ENCODE measurements at regions of chr7 and their contacts with region 1.

Region 1: GRCh38 chr7:149147072-149147751 is at the start of gene ZNF398:
- DNase-seq: peak; percentile 79
- H3K4me3 Mint-ChIP-seq: peak within 1 kb of the TSS; percentile 85
- H3K27ac Mint-ChIP-seq: peak within 1 kb of the TSS; percentile 90
- H3K4me1 Mint-ChIP-seq: peaks cover 35% of the 10 kb centered on the region
- H3K27me3 Mint-ChIP-seq: no peaks in the 10 kb centered on the region
- total RNA-seq, gene ZNF398: 12.1 to 13.7 TPM

Region 2: GRCh38 chr7:149090397-149091195 is 56.6 kb before region 1 on chr7 and contains the start of gene ZNF786:
- CTCF ChIA-PET with region 1: interaction called, 11 read pairs
- POLR2A ChIA-PET with region 1: interaction called, 3 read pairs
- DNase-seq: peak; percentile 90
- H3K4me3 Mint-ChIP-seq: peak within 1 kb of the TSS; percentile 97
- H3K27ac Mint-ChIP-seq: peak within 1 kb of the TSS; percentile 98
- H3K4me1 Mint-ChIP-seq: peaks cover 20% of the 10 kb centered on the region
- H3K27me3 Mint-ChIP-seq: no peaks in the 10 kb centered on the region
- total RNA-seq, gene ZNF786: 6.0 to 7.0 TPM

Region 3: DNA sequence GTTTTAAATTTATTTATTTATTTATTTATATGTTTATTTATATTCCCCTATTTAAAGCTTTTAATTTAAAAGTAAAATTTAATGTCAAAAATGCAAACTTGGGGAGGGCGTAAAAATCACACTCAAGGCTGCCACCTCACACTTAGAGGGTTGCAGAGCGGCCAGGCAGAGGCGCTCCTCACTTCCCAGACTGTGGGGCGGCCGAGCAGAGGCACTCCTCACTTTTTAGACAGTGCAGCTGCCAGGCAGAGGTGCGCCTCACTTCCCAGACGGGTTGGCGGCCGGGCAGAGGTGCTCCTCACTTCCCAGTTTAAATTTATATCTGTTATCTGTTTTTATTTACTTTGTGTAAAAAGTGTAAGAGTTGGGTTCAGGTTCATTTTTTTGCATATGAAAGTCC is 11.1 kb before region 1 on chr7:
- CTCF ChIA-PET with region 1: interaction called, 10 read pairs
- POLR2A ChIA-PET with region 1: interaction called, 6 read pairs
- DNase-seq: no peak
- H3K4me3 Mint-ChIP-seq: no peak overlapping the region
- H3K27ac Mint-ChIP-seq: no peak overlapping the region
- H3K4me1 Mint-ChIP-seq: no peaks in the 10 kb centered on the region
- H3K27me3 Mint-ChIP-seq: no peaks in the 10 kb centered on the region

Region 4: DNA sequence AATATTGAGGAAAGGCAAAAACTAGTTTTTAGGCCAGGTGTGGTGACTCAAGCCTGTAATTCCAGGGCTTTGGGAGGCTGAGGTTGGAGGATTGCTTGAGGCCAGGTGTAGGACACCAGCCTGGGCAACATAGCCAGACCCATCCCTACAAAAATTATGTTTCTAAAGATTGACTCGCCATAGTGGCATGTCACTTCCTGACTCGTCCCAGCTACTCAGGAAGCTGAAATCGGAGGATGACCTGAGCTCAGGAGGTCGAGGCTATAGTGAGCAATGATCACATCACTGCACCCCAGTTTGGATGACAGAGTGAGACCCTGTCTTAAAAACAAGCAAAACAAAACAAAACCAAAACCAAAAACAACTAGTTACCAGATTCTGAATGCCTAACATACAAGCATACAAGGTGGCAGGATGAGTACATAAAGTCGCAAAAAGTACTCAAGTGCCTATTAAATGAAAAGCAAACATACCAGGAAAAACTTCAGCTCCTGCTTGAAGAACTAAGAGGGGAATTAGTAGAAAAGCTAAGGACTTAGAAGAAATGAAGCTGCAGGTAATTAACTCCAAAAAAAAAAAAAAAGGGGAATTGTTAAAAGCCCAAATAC is 14.1 kb after region 1 on chr7:
- CTCF ChIA-PET with region 1: interaction called, 7 read pairs
- POLR2A ChIA-PET with region 1: interaction called, 11 read pairs
- DNase-seq: no peak
- H3K4me3 Mint-ChIP-seq: no peak overlapping the region
- H3K27ac Mint-ChIP-seq: peak overlapping the region; percentile 71
- H3K4me1 Mint-ChIP-seq: peaks cover 23% of the 10 kb centered on the region
- H3K27me3 Mint-ChIP-seq: no peaks in the 10 kb centered on the region

Region 5: DNA sequence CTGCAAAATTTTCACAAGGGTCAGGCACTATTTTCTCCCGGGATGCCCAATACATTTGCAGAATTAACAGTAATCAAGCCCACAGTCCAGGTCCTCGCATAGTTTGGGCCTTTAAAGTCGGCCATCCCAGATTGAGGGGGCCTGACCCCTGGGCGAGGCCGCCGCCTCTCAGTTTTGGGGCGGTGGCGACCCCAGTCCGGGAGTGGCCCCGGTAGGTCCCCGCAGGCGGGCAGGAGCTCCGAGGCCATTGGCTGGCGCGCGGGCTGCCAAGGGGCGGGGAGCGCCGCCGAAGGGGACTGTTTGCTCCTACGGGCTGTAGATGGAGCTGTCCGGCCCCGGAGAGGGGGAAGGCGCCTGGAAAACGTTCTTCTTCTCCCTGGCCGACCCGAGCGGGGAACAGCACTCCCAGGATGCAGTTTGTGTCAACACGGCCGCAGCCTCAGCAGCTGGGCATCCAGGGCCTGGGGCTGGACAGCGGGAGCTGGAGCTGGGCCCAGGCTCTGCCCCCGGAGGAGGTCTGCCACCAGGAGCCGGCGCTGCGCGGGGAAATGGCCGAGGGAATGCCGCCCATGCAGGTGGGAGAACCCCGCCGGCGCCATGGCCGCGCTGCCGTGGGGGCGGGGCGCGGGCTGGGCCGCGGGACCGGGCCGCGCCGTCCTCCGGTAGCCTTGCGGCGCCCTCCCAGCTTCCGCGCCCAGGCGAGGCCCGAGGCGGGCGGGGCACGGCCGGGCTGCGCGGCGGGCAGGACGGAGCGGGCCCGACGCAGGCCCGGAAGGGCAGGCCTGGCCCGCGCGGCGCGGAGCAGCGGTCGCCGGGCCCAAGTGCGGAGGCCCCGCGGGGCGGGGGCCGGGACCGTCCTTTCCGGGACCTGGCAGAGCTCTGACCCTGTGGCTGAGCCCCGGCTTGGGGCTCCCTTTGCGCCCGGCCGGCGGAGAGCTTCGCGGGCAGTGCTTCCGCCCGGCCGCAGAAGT is 48.3 kb after region 1 on chr7 and contains the start of gene ZNF282:
- CTCF ChIA-PET with region 1: interaction called, 27 read pairs
- POLR2A ChIA-PET with region 1: interaction called, 32 read pairs
- DNase-seq: peak; percentile 81
- H3K4me3 Mint-ChIP-seq: peak within 1 kb of the TSS; percentile 96
- H3K27ac Mint-ChIP-seq: peak within 1 kb of the TSS; percentile 94
- H3K4me1 Mint-ChIP-seq: peaks cover 57% of the 10 kb centered on the region
- H3K27me3 Mint-ChIP-seq: no peaks in the 10 kb centered on the region
- total RNA-seq, gene ZNF282: 66.1 to 66.6 TPM